ENCODE measurements at regions of chr3 and their contacts with region 1.

Region 1: GRCh38 chr3:184250167-184250828 is 826 bp downstream of the EEF1AKMT4 start:
- DNase-seq: peak; percentile 94
- H3K4me3 ChIP-seq: peak overlapping the region; percentile 84
- H3K27ac ChIP-seq: peak overlapping the region; percentile 40
- H3K4me1 ChIP-seq: no peaks in the 10 kb centered on the region
- H3K27me3 ChIP-seq: no peaks in the 10 kb centered on the region
- CTCF ChIP-seq: peak; percentile 91

Region 2: GRCh38 chr3:184135149-184135910 is 115.0 kb before region 1 on chr3 and contains the start of gene EIF2B5:
- CTCF ChIA-PET with region 1: no interaction called
- POLR2A ChIA-PET with region 1: no interaction called
- intact Hi-C with region 1: loop called (anchors 5 kb)
- DNase-seq: peak; percentile 98
- H3K4me3 ChIP-seq: peak within 1 kb of the TSS; percentile 89
- H3K27ac ChIP-seq: peak within 1 kb of the TSS; percentile 84
- H3K4me1 ChIP-seq: peaks cover 9% of the 10 kb centered on the region
- H3K27me3 ChIP-seq: no peaks in the 10 kb centered on the region
- CTCF ChIP-seq: peak; percentile 53
- total RNA-seq, gene EIF2B5: 57.8 and 64.2 TPM in 2 replicates

Region 3: GRCh38 chr3:184261854-184262763 is 11.8 kb after region 1 on chr3:
- CTCF ChIA-PET with region 1: interaction called, 11 read pairs
- POLR2A ChIA-PET with region 1: no interaction called
- intact Hi-C with region 1: no loop called
- DNase-seq: peak; percentile 37
- H3K4me3 ChIP-seq: peak overlapping the region; percentile 51
- H3K27ac ChIP-seq: no peak overlapping the region
- H3K4me1 ChIP-seq: peaks cover 11% of the 10 kb centered on the region
- H3K27me3 ChIP-seq: peaks cover 25% of the 10 kb centered on the region
- CTCF ChIP-seq: no peak

Region 4: GRCh38 chr3:184289426-184289938 is 39.2 kb after region 1 on chr3:
- CTCF ChIA-PET with region 1: no interaction called
- POLR2A ChIA-PET with region 1: no interaction called
- intact Hi-C with region 1: no loop called
- DNase-seq: peak; percentile 69
- H3K4me3 ChIP-seq: no peak overlapping the region
- H3K27ac ChIP-seq: no peak overlapping the region
- H3K4me1 ChIP-seq: no peaks in the 10 kb centered on the region
- H3K27me3 ChIP-seq: no peaks in the 10 kb centered on the region
- CTCF ChIP-seq: peak; percentile 76

Region 5: DNA sequence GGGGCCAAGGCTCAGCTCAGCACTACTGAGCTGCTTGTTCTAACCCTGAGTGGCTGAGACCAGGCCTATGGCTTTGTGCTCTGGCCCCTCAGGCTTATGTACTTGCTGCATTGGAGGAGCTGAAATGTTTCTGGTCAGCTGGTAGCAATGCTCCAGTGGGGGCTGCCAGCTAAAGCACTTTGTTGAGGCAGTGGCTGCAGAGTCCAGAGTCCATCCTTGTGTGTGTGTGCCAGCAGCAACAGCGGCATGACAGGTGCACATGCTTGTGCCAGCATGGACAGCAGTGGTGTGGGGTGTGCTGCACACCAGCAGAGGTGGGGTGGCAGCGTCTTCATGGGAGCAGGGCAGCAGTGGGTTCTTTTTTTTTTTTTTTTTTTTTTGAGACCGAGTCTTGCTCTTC is 730.8 kb after region 1 on chr3:
- CTCF ChIA-PET with region 1: no interaction called
- POLR2A ChIA-PET with region 1: no interaction called
- intact Hi-C with region 1: no loop called
- DNase-seq: no peak
- H3K4me3 ChIP-seq: no peak overlapping the region
- H3K27ac ChIP-seq: no peak overlapping the region
- H3K4me1 ChIP-seq: peaks cover 10% of the 10 kb centered on the region
- H3K27me3 ChIP-seq: no peaks in the 10 kb centered on the region
- CTCF ChIP-seq: no peak